Lower leg skin (tissue), 4 donors: ENCODE measurements at regions of chr16 and their contacts with region 1.

Region 1: DNA sequence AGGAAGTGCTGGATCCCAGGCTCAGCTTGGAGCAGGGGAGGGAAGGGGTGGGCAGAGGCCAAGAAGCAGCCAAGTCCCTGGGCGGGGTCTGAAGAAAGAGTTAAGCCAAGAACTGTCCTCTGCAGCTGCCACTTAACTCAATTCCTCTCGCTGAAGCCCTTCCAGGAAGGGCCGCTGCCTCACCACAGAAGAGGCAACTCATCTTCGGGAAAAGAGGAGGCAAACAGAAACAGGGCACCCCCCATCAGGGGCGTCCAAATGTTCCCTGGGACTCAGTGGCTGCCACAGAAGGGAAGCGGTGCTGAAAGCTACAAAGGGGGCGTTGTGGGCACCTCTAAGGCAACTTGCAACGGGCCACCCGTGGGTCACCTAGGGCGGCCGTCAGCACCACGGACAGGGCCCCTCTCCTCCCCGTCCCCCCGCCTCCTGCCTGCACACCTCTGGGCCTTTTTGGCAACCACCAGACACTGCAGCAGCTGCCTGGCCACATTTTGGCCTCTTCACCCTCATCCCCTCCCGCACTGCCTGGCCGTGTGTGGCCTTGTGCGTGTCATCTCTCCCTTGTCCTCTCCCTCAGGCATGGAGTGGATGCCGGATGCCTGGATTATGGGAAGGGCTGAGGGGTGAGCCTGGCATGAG is 2.5 kb downstream of the TLCD3B start:
- DNase-seq: no peak
- H3K4me3 ChIP-seq: no peak overlapping the region
- CTCF ChIP-seq: no peak
- POLR2A ChIP-seq: no peak

Region 2: GRCh38 chr16:29694384-29695195 is 334.0 kb before region 1 on chr16:
- intact Hi-C with region 1: loop called (anchors 5 kb)
- DNase-seq: no peak
- H3K4me3 ChIP-seq: no peak overlapping the region
- CTCF ChIP-seq: no peak
- POLR2A ChIP-seq: no peak

Region 3: GRCh38 chr16:29906520-29907244 is 121.9 kb before region 1 on chr16:
- intact Hi-C with region 1: loop called (anchors 1 kb)
- DNase-seq: no peak
- H3K4me3 ChIP-seq: no peak overlapping the region
- CTCF ChIP-seq: no peak
- POLR2A ChIP-seq: no peak

Region 4: DNA sequence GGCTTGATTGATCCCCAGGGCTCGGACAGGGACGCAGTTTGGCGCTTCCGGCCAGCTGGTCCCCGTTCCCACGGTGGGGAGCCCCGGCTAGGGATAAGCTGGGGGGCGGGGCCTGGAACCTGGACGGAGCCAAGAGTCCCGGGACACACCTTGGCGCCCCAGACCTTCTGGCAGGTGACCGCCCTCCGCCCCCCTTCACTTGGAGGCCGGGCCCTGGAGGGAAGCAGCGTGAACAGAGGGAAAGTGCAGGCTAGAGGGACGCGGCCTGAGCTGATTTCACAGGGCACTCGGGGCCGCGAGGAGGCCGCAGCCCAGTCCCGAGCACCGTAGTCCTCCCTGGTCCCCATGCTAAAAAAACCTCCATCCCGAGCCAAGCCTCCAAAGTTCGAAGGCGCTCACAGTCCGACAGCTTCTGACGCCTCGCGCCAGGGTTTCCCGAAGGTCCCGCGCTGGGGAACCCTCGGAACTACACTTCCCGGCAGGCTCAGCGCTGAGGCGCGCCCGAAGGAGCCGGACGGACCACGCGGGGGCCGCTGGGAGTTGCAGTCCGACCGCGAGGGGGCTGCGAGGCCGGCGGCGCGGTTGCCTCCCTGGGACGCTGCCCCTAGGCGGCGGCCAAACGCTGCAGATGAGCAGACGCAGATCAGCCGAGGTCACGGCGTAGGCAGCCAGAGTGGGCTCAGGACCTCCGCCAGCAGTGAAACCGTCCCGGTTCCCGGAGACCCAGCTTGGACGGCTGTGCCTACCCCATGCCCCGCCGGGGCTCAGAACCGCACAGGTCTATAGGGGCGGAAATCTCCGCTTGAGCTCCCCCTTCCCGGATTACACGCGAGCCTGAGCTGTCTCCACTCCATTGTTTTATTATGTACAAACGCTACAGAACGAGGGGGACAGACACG is 63.2 kb after region 1 on chr16 and contains the start of gene TBX6:
- intact Hi-C with region 1: no loop called
- DNase-seq: peak; percentile 90 to 98
- H3K4me3 ChIP-seq: peak within 1 kb of the TSS; percentile 23
- CTCF ChIP-seq: peak in 2 of 3 donors; percentile 12 to 24
- POLR2A ChIP-seq: no peak
- total RNA-seq, gene TBX6: 2.6 to 7.2 (median 3.8) TPM